Activated CD4-positive, alpha-beta T cell treated with anti-CD3 and anti-CD28 coated beads, Interleukin-2, amount 10 ng/mL, durations not matched to agents 24 days and 14 days (primary cell): ENCODE measurements at regions of chr11 and their contacts with region 1.

Region 1: DNA sequence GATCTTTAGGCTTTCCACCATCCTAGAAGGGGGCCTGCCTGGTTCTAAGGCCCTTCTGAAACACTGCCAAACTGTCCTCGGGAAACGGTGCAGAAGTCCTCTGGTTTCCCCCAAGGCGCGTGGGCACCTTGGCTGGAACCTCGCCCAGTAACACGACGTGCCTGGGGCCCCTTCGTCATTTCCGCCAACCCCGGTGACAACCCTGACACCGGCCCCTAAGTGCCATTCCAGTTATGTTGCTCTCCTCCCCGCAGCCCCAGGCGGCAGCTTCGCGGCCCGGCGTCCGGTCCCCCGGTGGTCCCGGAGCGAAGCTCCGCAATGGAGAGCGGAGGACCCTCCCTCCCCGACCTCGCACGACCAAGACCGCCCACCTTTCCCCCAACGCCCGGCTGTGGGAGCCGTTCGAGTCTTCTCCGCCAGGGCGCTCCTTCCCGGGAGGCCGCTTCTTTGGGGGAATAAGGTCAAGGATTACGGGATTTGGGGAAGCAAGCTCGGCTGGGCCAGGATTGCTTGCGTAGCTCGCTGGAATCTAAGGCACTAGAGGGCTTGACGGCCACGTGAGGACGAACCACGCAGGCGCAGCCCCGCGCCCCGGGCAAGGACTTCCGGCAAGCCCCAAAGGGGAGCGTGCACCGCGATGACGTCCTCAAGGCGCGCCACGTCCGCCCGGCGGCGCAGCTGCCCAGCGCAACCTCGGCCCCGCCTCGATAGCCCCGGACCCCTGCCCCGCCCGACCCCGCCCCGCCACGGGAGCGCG is 626 bp downstream of the RNH1 start:
- DNase-seq: peak; percentile 99
- H3K4me3 Mint-ChIP-seq: peak overlapping the region; percentile 98
- H3K27ac Mint-ChIP-seq: peak overlapping the region; percentile 100
- H3K4me1 Mint-ChIP-seq: peaks cover 24% of the 10 kb centered on the region
- H3K27me3 Mint-ChIP-seq: no peaks in the 10 kb centered on the region

Region 2: DNA sequence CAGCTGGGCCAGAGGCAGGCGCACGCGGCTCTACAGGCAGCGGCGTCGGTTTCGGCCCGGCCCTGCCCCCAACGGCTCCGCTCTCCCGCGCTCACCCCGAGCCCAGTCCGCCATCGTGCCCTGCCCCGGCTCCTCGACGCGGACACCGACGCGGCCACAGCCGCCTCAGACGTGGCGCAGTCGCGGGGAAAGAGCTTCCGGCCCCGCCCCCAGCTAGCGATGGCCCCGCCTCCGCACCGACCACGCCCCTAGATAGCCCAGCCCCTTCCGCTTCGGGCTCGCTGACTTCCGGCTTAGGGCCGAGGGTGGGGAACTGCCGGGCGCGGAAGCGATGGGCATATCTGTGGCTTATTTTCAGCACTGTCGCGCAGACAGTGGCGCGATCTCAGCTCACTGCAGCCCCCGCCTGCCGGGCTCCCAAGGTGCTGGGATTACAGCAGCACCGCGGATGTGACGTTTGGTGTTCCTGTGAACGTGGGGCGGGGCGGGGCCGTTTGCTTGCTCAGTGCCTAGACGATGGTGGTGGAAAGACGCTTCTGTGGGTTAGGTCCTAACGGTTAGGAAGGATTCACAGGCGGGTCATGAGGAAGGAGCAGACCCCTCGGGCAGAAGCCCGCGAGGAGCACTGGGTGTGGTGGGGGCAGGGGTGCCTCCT is 299.1 kb before region 1 on chr11 and contains the starts of genes BET1L and RIC8A:
- intact Hi-C with region 1: loop called (anchors 1 kb)
- DNase-seq: peak; percentile 99
- H3K4me3 Mint-ChIP-seq: peak within 1 kb of the TSS; percentile 98
- H3K27ac Mint-ChIP-seq: peak within 1 kb of the TSS; percentile 100
- H3K4me1 Mint-ChIP-seq: peaks cover 29% of the 10 kb centered on the region
- H3K27me3 Mint-ChIP-seq: no peaks in the 10 kb centered on the region
- total RNA-seq, gene BET1L: 43.6 and 46.9 TPM in 2 replicates
- total RNA-seq, gene RIC8A: 118 and 128 TPM in 2 replicates

Region 3: DNA sequence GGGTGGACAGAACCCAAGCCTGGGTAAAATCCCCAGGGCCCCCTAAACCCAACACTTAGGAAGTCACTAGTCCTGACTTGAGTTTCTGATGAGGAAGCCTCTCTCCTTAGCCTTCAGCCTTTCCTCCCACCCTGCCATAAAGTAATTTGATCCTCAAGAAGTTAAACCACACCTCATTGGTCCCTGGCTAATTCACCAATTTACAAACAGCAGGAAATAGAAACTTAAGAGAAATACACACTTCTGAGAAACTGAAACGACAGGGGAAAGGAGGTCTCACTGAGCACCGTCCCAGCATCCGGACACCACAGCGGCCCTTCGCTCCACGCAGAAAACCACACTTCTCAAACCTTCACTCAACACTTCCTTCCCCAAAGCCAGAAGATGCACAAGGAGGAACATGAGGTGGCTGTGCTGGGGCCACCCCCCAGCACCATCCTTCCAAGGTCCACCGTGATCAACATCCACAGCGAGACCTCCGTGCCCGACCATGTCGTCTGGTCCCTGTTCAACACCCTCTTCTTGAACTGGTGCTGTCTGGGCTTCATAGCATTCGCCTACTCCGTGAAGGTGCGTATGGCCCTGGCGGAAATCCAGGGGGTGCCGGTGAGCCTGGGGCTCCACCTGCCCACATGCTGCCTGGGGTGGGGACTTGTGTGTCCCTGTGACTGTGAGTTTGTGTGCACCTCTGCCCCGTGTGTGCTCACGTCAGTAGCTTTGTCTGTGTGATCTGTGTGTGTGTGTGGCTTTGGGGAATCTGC is 192.4 kb before region 1 on chr11 and contains the start of gene IFITM1:
- intact Hi-C with region 1: loop called (anchors 1 kb)
- DNase-seq: peak; percentile 93
- H3K4me3 Mint-ChIP-seq: peak within 1 kb of the TSS; percentile 96
- H3K27ac Mint-ChIP-seq: peak within 1 kb of the TSS; percentile 98
- H3K4me1 Mint-ChIP-seq: peaks cover 36% of the 10 kb centered on the region
- H3K27me3 Mint-ChIP-seq: no peaks in the 10 kb centered on the region
- total RNA-seq, gene IFITM1: 241 and 256 TPM in 2 replicates

Region 4: DNA sequence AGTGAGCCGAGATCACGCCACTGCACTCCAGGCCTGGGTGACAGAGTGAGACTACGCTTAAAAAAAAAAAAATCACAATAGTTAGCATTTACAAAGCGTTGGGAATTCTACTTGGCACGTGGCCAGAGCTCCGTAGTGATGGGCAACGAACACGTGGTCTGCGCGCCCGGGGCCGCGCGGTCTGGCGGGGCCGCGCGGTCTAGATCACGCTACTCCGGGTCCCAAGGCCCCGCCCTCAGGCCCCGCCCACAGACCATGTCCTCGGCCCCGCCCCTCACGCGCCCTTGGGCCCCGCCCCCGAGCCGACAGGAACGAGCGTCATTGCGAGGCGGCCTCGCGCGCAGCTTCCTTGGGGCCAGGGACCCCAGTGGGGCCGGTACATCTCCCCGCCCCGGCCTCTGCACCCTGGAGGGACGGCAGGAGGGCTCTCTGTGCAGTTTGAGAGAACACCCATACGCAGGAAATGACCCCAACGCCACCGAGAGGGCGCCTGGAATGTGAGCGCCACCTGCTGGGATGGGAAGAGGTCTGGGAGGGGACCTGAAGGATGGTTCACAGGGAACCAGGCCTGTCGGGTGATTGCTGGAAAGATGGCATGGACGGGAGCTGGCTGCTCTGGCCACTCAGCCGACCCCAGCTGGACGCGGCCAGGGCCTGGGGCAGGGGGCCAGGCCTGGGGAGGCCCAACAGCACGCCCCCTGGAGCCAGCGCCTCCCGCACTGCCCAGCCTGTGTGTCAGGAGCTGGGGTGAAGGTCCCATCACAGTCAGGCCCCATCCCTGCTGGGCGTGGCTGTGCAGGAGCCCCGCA is 58.3 kb before region 1 on chr11:
- intact Hi-C with region 1: loop called (anchors 1 kb)
- DNase-seq: peak; percentile 98
- H3K4me3 Mint-ChIP-seq: peak overlapping the region; percentile 97
- H3K27ac Mint-ChIP-seq: peak overlapping the region; percentile 97
- H3K4me1 Mint-ChIP-seq: peaks cover 13% of the 10 kb centered on the region
- H3K27me3 Mint-ChIP-seq: peaks cover 8% of the 10 kb centered on the region

Region 5: GRCh38 chr11:479311-479710 is 27.1 kb before region 1 on chr11:
- intact Hi-C with region 1: no loop called
- DNase-seq: no peak
- H3K4me3 Mint-ChIP-seq: no peak overlapping the region
- H3K27ac Mint-ChIP-seq: no peak overlapping the region
- H3K4me1 Mint-ChIP-seq: no peaks in the 10 kb centered on the region
- H3K27me3 Mint-ChIP-seq: no peaks in the 10 kb centered on the region

Region 6: GRCh38 chr11:535519-536454 is 29.4 kb after region 1 on chr11 and contains the start of gene HRAS:
- intact Hi-C with region 1: loop called (anchors 1 kb)
- DNase-seq: peak; percentile 99
- H3K4me3 Mint-ChIP-seq: peak within 1 kb of the TSS; percentile 89
- H3K27ac Mint-ChIP-seq: peak within 1 kb of the TSS; percentile 83
- H3K4me1 Mint-ChIP-seq: peaks cover 15% of the 10 kb centered on the region
- H3K27me3 Mint-ChIP-seq: no peaks in the 10 kb centered on the region
- total RNA-seq, gene HRAS: 70.8 and 94.4 TPM in 2 replicates

Region 7: GRCh38 chr11:575996-576768 is 69.8 kb after region 1 on chr11 and contains the start of gene PHRF1:
- intact Hi-C with region 1: loop called (anchors 1 kb)
- DNase-seq: peak; percentile 98
- H3K4me3 Mint-ChIP-seq: peak within 1 kb of the TSS; percentile 87
- H3K27ac Mint-ChIP-seq: peak within 1 kb of the TSS; percentile 96
- H3K4me1 Mint-ChIP-seq: peaks cover 34% of the 10 kb centered on the region
- H3K27me3 Mint-ChIP-seq: peaks cover 4% of the 10 kb centered on the region
- total RNA-seq, gene PHRF1: 54.8 and 57.4 TPM in 2 replicates